ENCODE measurements at regions of chr4 and their contacts with region 1.

Region 1: GRCh38 chr4:73662709-73663546 is 42.7 kb upstream of the RASSF6 start:
- DNase-seq: peak; percentile 30
- CTCF ChIP-seq: peak; percentile 28

Region 2: DNA sequence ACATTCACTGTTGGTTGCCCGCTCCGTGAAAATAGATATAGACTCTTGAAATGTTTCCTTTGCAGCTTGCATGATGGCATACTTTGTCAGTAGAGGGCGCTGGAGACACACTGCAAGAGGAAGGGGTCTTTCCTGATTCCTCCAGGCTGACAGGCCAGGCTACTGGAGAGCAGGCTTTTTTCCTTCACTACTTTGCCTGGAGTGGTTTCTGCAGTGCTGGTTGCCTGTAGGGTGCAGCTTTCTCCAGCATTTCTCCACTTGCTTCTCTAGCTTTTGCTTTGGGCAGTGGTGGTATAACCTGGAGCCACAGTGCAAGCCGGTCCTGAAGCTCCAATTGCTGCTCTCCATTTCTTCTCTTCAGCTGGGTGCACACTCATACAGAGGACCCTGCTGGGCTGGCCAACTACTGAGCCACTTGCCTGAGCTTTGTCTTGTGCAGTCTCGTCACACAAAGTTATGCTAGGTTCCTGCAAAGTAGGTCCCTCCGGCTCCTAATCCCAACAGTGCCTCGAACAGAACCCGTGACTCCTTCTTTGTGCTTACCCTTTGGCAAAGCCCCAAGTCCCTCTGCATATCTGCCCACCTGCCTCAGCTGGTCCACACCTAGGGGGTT is 89.0 kb before region 1 on chr4:
- CTCF ChIA-PET with region 1: interaction called, 15 read pairs
- POLR2A ChIA-PET with region 1: no interaction called
- DNase-seq: peak; percentile 45
- CTCF ChIP-seq: peak; percentile 86

Region 3: DNA sequence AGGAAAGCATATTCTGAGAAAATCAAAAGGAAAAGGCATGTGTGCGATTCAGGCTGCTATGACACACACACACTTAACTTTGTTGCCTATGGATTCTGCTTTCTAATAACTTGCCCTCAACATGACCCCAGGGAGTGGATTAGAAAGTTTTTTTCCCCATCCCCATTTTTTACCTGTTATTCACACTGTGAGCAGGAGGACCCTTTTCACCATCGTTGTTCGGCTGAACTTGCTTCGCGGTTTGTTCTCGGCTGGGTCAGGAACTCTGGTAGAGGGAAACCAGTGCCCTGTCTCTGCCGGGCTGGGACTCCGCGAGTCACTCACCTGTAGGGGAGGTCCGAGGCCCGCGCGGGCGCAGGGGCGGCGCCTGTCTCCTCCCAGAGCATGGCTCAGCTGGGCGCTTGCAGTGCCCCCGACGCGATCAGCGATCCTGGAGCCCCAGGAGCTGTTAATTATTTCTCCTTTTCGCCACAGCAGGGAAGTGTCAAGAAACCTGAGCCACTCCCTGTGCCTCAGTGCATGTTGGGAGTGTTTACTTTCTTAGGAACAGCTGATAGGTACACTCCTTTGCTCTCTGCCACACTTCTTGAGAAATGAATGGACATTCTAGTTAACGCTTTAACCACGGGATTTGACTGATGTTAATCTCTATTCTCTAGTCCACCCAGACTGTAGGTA is 42.7 kb before region 1 on chr4 and contains the start of gene RASSF6:
- CTCF ChIA-PET with region 1: no interaction called
- POLR2A ChIA-PET with region 1: no interaction called
- DNase-seq: peak; percentile 36
- CTCF ChIP-seq: no peak

Region 4: GRCh38 chr4:73674451-73674919 is 11.6 kb after region 1 on chr4:
- CTCF ChIA-PET with region 1: interaction called, 24 read pairs
- POLR2A ChIA-PET with region 1: no interaction called
- DNase-seq: no peak
- CTCF ChIP-seq: no peak

Region 5: GRCh38 chr4:73864365-73864764 is 201.4 kb after region 1 on chr4:
- CTCF ChIA-PET with region 1: interaction called, 15 read pairs
- POLR2A ChIA-PET with region 1: no interaction called
- DNase-seq: peak; percentile 15
- CTCF ChIP-seq: peak; percentile 51

Region 6: DNA sequence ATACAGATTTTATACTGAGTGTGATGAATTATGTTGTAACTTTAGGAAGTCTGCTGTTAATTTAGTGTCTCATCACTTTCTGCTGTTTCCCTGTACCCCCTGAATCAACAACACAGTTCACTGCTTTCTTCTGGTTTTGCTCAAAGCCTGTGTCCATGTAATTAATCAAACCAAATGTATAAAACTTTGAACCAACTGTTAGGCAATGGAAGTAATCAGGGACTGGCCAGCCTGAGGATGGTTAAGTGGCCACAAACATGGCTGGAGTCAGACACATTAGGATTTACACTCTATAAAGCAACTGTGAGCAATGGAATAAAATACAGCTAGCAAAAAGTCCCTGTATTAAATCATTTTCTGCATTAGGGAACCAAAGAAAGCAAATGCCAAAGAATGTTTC is 248.8 kb after region 1 on chr4:
- CTCF ChIA-PET with region 1: no interaction called
- POLR2A ChIA-PET with region 1: no interaction called
- DNase-seq: no peak
- CTCF ChIP-seq: no peak

Measured in GM10248 (cell line).